ENCODE measurements at regions of chr3 and their contacts with region 1.

Region 1: DNA sequence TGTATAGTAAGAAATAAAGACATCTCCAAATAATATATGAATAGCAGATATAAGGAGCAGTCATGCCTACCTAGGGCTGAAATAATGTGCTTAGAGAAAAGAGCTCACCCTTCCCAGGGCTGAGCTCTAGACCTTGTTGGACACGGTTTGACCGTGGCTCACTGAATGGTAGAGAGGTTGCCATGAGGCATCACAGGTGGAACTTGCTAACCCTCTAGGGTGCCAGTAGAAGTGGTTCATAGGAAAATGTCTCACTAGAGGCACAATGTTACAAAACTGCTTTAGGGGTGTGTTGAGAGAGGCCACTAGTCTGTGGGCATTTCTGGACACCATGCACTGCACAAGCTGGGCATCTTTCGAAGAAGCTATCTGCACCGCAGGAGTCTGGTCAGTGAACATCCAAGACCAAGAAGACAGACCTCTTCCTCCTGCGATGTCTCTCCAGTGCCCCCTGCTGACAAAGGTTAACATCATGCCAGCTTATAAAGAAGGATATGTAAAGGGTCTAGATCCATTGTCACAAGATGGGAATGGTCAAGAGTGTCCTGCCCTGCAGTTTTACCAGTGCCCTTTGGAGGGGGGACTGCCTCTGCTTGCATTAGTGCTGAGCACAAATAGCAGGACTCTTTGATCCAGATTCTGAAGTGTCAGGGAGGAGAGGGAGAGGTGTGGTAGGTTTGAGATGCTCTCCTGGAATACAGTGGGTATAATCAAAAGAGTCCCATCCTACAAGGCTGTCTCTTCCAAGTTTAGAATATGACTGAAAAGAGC is 266.8 kb downstream of the ZNF385D start:
- DNase-seq: peak; percentile 50
- H3K4me3 ChIP-seq: no peak overlapping the region
- H3K27ac ChIP-seq: no peak overlapping the region
- H3K4me1 ChIP-seq: no peaks in the 10 kb centered on the region
- H3K27me3 ChIP-seq: no peaks in the 10 kb centered on the region
- CTCF ChIP-seq: peak; percentile 67 to 88

Region 2: GRCh38 chr3:20340324-20340928 is 1143.8 kb before region 1 on chr3:
- CTCF ChIA-PET with region 1: no interaction called
- dilution Hi-C with region 1: no loop called
- in situ Hi-C with region 1: no loop called
- intact Hi-C with region 1: loop called (anchors 1 kb)
- DNase-seq: peak; percentile 56
- H3K4me3 ChIP-seq: no peak overlapping the region
- H3K27ac ChIP-seq: no peak overlapping the region
- H3K4me1 ChIP-seq: no peaks in the 10 kb centered on the region
- H3K27me3 ChIP-seq: no peaks in the 10 kb centered on the region
- CTCF ChIP-seq: peak; percentile 80 to 87

Region 3: DNA sequence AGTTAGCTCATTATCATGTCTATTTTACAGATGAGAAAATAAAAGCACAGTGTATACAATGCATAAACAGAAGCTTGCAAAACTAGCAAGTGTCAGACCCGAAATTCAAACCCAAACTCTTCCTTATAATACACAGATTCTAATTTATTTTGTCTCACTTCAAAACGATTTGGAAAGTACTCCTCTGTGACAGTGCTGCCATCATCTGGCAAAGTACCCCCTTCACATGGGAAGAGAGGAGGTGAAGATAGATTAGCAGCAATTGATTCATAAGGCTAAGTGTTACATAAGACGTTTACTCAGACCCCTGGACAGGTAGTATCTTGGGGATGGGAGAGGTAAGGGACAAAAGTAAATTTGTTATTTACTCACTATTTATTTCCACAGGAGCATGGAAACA is 554.2 kb before region 1 on chr3:
- CTCF ChIA-PET with region 1: no interaction called
- dilution Hi-C with region 1: no loop called
- in situ Hi-C with region 1: no loop called
- intact Hi-C with region 1: loop called (anchors 5 kb)
- DNase-seq: peak; percentile 23
- H3K4me3 ChIP-seq: no peak overlapping the region
- H3K27ac ChIP-seq: no peak overlapping the region
- H3K4me1 ChIP-seq: no peaks in the 10 kb centered on the region
- H3K27me3 ChIP-seq: no peaks in the 10 kb centered on the region
- CTCF ChIP-seq: peak; percentile 13 to 35

Region 4: GRCh38 chr3:21226086-21226485 is 258.2 kb before region 1 on chr3:
- CTCF ChIA-PET with region 1: no interaction called
- dilution Hi-C with region 1: no loop called
- in situ Hi-C with region 1: no loop called
- intact Hi-C with region 1: loop called (anchors 2 kb)
- DNase-seq: no peak
- H3K4me3 ChIP-seq: no peak overlapping the region
- H3K27ac ChIP-seq: no peak overlapping the region
- H3K4me1 ChIP-seq: no peaks in the 10 kb centered on the region
- H3K27me3 ChIP-seq: no peaks in the 10 kb centered on the region
- CTCF ChIP-seq: no peak

Region 5: GRCh38 chr3:21390136-21390535 is 94.1 kb before region 1 on chr3:
- CTCF ChIA-PET with region 1: no interaction called
- dilution Hi-C with region 1: no loop called
- in situ Hi-C with region 1: no loop called
- intact Hi-C with region 1: no loop called
- DNase-seq: peak; percentile 54
- H3K4me3 ChIP-seq: no peak overlapping the region
- H3K27ac ChIP-seq: no peak overlapping the region
- H3K4me1 ChIP-seq: no peaks in the 10 kb centered on the region
- H3K27me3 ChIP-seq: no peaks in the 10 kb centered on the region
- CTCF ChIP-seq: no peak

Region 6: DNA sequence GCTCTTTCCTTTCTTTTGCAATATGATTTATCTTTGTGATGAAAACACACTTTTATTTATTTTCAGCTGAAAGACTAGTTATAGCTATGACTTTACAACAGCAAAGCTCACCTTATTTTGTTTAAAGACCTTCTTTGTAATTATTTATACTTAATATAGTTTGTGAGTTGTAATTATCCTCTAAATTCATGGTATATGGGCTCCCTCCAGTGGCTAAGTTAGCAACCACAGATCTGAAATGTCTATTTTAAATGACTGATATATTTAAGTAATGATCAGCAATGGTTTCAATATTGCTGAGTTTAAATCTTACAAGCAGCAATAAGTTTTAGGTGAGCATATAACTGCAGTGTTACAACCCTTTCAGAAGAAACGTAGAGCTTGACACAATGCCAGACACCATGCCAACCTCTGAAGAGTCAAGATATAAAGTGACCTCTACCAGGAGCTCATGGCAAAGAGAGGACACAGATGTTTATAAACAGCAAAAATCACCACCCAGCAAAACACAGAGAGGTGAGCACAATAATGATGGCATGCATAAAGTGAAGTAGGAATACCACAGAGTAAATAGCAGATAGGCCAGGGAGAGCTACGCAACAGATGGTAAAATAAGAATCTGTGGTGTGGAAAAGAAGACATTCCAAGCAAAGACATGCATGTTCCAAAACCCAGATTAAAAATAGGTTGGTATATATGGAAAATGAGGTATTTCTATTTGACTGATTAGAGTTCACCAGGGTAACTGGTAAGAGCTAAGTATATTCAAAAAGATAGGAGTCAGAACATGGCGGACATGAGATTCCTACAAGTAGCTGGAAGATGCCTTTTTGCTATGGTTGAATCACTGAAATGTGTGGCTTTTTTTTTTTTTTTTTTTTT is 410.5 kb after region 1 on chr3:
- CTCF ChIA-PET with region 1: no interaction called
- dilution Hi-C with region 1: no loop called
- in situ Hi-C with region 1: no loop called
- intact Hi-C with region 1: loop called (anchors 2 kb)
- DNase-seq: no peak
- H3K4me3 ChIP-seq: no peak overlapping the region
- H3K27ac ChIP-seq: no peak overlapping the region
- H3K4me1 ChIP-seq: no peaks in the 10 kb centered on the region
- H3K27me3 ChIP-seq: no peaks in the 10 kb centered on the region
- CTCF ChIP-seq: peak; percentile 59

Measured in mammary epithelial cell (primary cell).